ENCODE measurements at regions of chr2 and their contacts with region 1.

Region 1: GRCh38 chr2:45778720-45779171 is 127.3 kb downstream of the PRKCE start:
- DNase-seq: peak; percentile 68
- H3K4me3 Mint-ChIP-seq: no peak overlapping the region
- H3K27ac Mint-ChIP-seq: peak overlapping the region; percentile 30
- H3K4me1 Mint-ChIP-seq: peaks cover 5% of the 10 kb centered on the region
- H3K27me3 Mint-ChIP-seq: no peaks in the 10 kb centered on the region

Region 2: GRCh38 chr2:44528595-44528994 is 1250.2 kb before region 1 on chr2:
- CTCF ChIA-PET with region 1: no interaction called
- POLR2A ChIA-PET with region 1: no interaction called
- intact Hi-C with region 1: no loop called
- DNase-seq: no peak
- H3K4me3 Mint-ChIP-seq: no peak overlapping the region
- H3K27ac Mint-ChIP-seq: no peak overlapping the region
- H3K4me1 Mint-ChIP-seq: no peaks in the 10 kb centered on the region
- H3K27me3 Mint-ChIP-seq: no peaks in the 10 kb centered on the region

Region 3: DNA sequence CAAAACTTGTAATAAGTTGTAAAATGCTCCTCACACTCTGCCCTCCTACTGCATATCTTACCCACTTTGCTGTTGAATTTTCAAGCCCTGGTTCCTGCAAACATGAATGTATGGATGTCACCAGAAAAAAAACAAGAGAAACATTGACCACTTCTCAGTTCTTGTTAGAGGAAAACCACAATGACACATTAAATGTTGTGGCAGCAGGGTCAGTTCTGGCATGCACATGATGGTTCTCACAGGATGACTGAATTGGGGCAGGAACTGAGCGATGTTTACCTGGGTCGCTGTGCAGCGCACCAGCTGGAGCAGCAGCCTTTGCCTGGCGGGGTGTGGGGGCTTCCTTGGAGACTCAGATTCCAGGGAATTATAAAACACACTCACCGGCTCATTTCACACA is 141.3 kb before region 1 on chr2:
- CTCF ChIA-PET with region 1: interaction called, 103 read pairs
- POLR2A ChIA-PET with region 1: no interaction called
- intact Hi-C with region 1: no loop called
- DNase-seq: peak; percentile 19
- H3K4me3 Mint-ChIP-seq: no peak overlapping the region
- H3K27ac Mint-ChIP-seq: no peak overlapping the region
- H3K4me1 Mint-ChIP-seq: peaks cover 4% of the 10 kb centered on the region
- H3K27me3 Mint-ChIP-seq: peaks cover 25% of the 10 kb centered on the region

Region 4: DNA sequence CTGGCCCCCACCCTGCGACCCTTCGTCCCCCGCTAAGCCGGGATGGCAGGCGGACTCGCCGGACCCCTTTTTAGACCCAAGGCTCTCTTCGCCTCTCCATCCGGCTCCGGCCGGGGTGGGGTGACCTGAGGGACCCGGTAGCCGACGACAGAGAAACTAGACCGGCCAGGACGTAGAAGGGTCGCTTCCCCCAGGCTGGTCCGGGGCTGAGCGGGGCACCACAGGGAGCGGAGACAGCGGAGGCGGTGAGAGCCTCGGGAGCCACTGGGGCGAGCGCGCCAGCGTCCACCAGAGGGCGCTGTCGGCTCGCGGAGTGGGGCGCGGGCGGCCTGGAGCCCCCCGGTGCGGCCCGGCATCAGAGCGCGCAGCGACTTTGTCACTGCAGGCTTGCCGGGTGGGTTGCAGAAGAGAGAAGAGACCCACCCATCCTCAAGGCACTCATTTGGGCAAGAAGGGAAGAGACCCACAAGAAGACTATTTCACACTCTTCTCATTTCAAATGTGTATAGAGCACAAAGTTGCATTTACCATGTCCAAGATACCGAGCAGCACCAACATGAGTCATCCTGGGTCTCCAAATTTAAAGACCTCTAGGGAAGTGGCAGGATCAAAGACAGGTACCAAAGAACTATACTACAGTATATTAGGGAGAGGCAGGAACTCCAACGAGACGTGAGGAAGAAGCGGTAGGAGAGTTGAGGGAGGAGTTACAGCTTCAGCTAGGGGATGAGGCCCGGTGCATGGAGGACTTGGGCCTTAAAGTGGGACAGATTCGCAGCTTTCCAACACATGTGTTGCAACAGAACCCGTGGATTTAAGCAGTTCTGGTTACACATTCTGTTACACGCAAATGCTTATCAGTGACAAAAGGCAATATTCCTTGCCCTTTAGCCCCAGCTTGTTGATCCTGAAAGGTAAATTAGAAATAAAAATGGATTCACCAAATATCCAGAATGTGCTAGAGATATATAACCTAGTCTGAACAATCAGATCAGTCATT is 134.9 kb before region 1 on chr2:
- CTCF ChIA-PET with region 1: interaction called, 103 read pairs
- POLR2A ChIA-PET with region 1: interaction called, 3 read pairs
- intact Hi-C with region 1: loop called (anchors 1 kb)
- DNase-seq: peak; percentile 76
- H3K4me3 Mint-ChIP-seq: peak overlapping the region; percentile 47
- H3K27ac Mint-ChIP-seq: no peak overlapping the region
- H3K4me1 Mint-ChIP-seq: peaks cover 10% of the 10 kb centered on the region
- H3K27me3 Mint-ChIP-seq: peaks cover 22% of the 10 kb centered on the region

Region 5: DNA sequence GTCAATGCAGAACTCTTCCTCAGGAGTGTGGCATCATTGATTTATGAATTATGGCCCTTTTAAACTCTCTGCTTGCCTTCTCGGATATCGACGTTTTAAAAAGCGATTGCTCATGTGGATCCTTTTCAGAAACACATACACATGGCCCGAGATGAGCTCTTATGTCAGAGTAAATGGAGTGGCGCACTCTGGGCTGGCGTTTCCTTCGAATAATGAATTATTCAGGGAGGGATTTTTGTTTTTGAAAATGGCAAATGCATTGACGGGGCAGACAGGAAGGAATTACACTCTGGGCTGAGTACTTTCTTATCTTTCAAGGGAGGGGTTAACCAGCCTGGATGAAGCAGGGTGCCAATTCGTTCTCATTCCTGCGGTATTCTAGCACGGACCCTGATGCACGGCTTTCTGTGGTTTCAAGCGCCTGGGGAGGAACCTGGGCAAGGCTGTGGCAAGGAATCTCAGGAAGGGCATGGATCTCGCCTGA is 15.4 kb after region 1 on chr2:
- CTCF ChIA-PET with region 1: interaction called, 27 read pairs
- POLR2A ChIA-PET with region 1: interaction called, 3 read pairs
- intact Hi-C with region 1: no loop called
- DNase-seq: no peak
- H3K4me3 Mint-ChIP-seq: no peak overlapping the region
- H3K27ac Mint-ChIP-seq: no peak overlapping the region
- H3K4me1 Mint-ChIP-seq: no peaks in the 10 kb centered on the region
- H3K27me3 Mint-ChIP-seq: no peaks in the 10 kb centered on the region

Region 6: DNA sequence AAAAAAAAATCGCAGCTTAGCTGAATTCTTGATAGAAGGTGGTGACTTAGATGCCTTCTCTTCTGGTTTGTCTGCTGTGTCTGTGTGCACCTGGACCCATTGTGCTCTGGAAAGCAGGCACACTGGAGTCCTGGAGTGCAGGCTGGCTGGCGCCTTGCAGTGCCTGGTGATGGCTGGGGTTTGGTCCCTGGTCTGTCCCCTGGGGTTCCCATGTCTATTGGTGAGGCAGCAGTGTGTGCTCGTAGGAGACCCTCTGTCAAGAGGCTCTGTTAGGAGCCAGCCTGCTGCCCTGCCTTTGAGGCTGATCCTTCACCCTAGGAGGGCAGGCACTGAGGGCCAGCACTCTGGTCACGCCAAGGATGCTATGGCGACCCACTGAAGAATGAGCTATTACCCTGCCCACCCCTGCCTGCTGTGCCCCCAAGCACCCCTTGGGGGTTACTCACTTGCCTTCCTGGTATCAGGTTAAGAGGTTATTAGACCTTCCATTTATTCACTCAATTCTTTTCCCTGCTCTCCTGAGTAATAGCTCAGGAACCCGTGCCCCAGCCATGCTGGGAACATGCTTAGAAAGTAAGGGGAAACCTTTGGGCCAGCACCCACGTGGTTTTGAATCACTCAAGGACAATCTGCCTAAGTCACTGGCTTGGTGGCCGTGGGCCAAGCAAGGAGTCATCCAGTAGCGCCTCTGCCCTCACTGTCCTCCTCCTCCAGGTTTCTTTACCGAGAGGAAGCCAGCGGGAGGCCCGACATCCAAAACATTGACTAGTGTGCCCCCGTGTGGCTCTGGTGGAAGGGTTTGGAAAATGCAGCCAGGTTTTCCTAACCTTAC is 157.3 kb after region 1 on chr2:
- CTCF ChIA-PET with region 1: interaction called, 6 read pairs
- POLR2A ChIA-PET with region 1: no interaction called
- intact Hi-C with region 1: loop called (anchors 1 kb)
- DNase-seq: peak; percentile 77
- H3K4me3 Mint-ChIP-seq: no peak overlapping the region
- H3K27ac Mint-ChIP-seq: no peak overlapping the region
- H3K4me1 Mint-ChIP-seq: peaks cover 9% of the 10 kb centered on the region
- H3K27me3 Mint-ChIP-seq: no peaks in the 10 kb centered on the region

Measured in activated CD4-positive, alpha-beta memory T cell treated with anti-CD3 and anti-CD28 coated beads for 36 hours (primary cell).